CD8-positive, alpha-beta T cell (primary cell): ENCODE measurements at regions of chr9 and their contacts with region 1.

Region 1: GRCh38 chr9:81595887-81596543 is 93.3 kb downstream of the TLE1 start:
- DNase-seq: no peak
- ATAC-seq: no peak
- H3K4me3 ChIP-seq: no peak overlapping the region
- H3K4me3 Mint-ChIP-seq: no peak overlapping the region
- H3K27ac ChIP-seq: no peak overlapping the region
- H3K27ac Mint-ChIP-seq: no peak overlapping the region
- H3K4me1 ChIP-seq: no peaks in the 10 kb centered on the region
- H3K4me1 Mint-ChIP-seq: peaks cover 17% of the 10 kb centered on the region
- H3K27me3 ChIP-seq: no peaks in the 10 kb centered on the region
- H3K27me3 Mint-ChIP-seq: peaks cover 13% of the 10 kb centered on the region
- CTCF ChIP-seq: no peak

Region 2: GRCh38 chr9:81689343-81690190 is 93.6 kb after region 1 on chr9 and contains the start of gene TLE1:
- CTCF ChIA-PET with region 1: no interaction called
- POLR2A ChIA-PET with region 1: no interaction called
- intact Hi-C with region 1: loop called in 1 of 2 experiments (anchors 5 kb)
- DNase-seq: peak; percentile 39 to 90 (median 79)
- ATAC-seq: peak; percentile 83
- H3K4me3 ChIP-seq: peak within 1 kb of the TSS; percentile 67 to 85
- H3K4me3 Mint-ChIP-seq: peak within 1 kb of the TSS; percentile 96
- H3K27ac ChIP-seq: peak within 1 kb of the TSS; percentile 48 to 66
- H3K27ac Mint-ChIP-seq: peak within 1 kb of the TSS; percentile 87
- H3K4me1 ChIP-seq: peaks cover 11% of the 10 kb centered on the region
- H3K4me1 Mint-ChIP-seq: peaks cover 14% of the 10 kb centered on the region
- H3K27me3 ChIP-seq: no peaks in the 10 kb centered on the region
- H3K27me3 Mint-ChIP-seq: peaks cover 2% of the 10 kb centered on the region
- CTCF ChIP-seq: no peak
- total RNA-seq, gene TLE1: 14.1 to 14.3 TPM